ENCODE measurements at regions of chr16 and their contacts with region 1.

Region 1: GRCh38 chr16:71746442-71747046 is 22.0 kb upstream of the PHLPP2 start:
- DNase-seq: no peak
- ATAC-seq: peak; percentile 60
- H3K4me3 Mint-ChIP-seq: no peak overlapping the region
- H3K27ac Mint-ChIP-seq: no peak overlapping the region
- H3K4me1 Mint-ChIP-seq: no peaks in the 10 kb centered on the region
- H3K27me3 Mint-ChIP-seq: no peaks in the 10 kb centered on the region
- CTCF ChIP-seq: peak; percentile 88

Region 2: DNA sequence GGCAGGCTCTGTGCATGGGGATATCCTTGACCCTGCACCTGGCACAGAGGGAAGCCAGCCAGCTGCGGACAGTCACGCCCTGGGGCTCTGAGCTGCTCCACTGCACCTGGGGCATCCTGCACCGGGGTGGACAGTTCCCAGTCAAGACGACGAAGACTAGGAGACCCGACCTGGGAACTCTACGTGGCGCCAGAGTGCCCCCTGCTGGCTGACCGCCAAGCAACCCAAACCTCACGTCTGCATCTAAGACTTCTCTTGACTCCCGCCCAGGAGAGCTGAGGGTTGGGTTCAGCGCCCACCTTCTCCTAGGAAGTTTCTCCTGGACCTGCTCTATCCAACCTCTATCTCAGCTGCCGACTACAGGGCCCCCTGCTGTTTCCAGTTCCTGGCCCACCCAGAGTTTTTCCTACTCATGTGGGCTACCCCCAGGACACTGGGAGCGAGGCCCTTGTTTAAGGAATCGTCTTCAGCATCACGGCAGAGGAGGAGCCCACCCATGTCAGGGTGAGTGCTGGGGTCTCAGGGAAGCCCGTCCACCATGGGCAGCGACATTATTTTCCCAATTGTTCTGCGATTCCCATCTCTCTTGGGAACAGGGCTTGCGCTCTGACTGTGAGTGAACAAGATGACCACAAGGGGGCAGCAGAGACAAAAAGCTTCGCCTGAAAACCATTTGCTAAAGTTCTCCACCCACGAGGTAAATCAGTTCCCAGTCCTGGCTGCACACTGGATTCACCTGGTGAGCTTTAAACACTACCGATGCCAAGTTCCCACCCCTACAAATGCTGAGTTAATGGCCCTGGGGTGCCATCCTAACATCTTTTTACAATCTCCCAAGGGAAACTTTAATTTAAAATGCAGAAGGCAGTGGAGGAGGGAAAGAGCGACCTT is 334.0 kb before region 1 on chr16:
- CTCF ChIA-PET with region 1: no interaction called
- POLR2A ChIA-PET with region 1: no interaction called
- intact Hi-C with region 1: loop called (anchors 1 kb)
- DNase-seq: peak; percentile 36
- ATAC-seq: peak; percentile 57
- H3K4me3 Mint-ChIP-seq: no peak overlapping the region
- H3K27ac Mint-ChIP-seq: no peak overlapping the region
- H3K4me1 Mint-ChIP-seq: peaks cover 9% of the 10 kb centered on the region
- H3K27me3 Mint-ChIP-seq: peaks cover 32% of the 10 kb centered on the region
- CTCF ChIP-seq: peak; percentile 38

Region 3: GRCh38 chr16:71676236-71676635 is 70.3 kb before region 1 on chr16:
- CTCF ChIA-PET with region 1: no interaction called
- POLR2A ChIA-PET with region 1: no interaction called
- intact Hi-C with region 1: loop called (anchors 1 kb)
- DNase-seq: no peak
- ATAC-seq: no peak
- H3K4me3 Mint-ChIP-seq: no peak overlapping the region
- H3K27ac Mint-ChIP-seq: no peak overlapping the region
- H3K4me1 Mint-ChIP-seq: no peaks in the 10 kb centered on the region
- H3K27me3 Mint-ChIP-seq: no peaks in the 10 kb centered on the region
- CTCF ChIP-seq: no peak

Region 4: GRCh38 chr16:71693164-71693563 is 53.4 kb before region 1 on chr16:
- CTCF ChIA-PET with region 1: no interaction called
- POLR2A ChIA-PET with region 1: no interaction called
- intact Hi-C with region 1: loop called (anchors 1 kb)
- DNase-seq: no peak
- ATAC-seq: peak; percentile 62
- H3K4me3 Mint-ChIP-seq: peak overlapping the region; percentile 6
- H3K27ac Mint-ChIP-seq: peak overlapping the region; percentile 50
- H3K4me1 Mint-ChIP-seq: peaks cover 23% of the 10 kb centered on the region
- H3K27me3 Mint-ChIP-seq: no peaks in the 10 kb centered on the region
- CTCF ChIP-seq: no peak

Region 5: GRCh38 chr16:71723537-71724319 is 22.8 kb before region 1 on chr16:
- CTCF ChIA-PET with region 1: no interaction called
- POLR2A ChIA-PET with region 1: interaction called, 5 read pairs
- intact Hi-C with region 1: loop called (anchors 1 kb)
- DNase-seq: peak; percentile 87
- ATAC-seq: peak; percentile 80
- H3K4me3 Mint-ChIP-seq: peak overlapping the region; percentile 85
- H3K27ac Mint-ChIP-seq: peak overlapping the region; percentile 85
- H3K4me1 Mint-ChIP-seq: peaks cover 50% of the 10 kb centered on the region
- H3K27me3 Mint-ChIP-seq: no peaks in the 10 kb centered on the region
- CTCF ChIP-seq: no peak

Region 6: GRCh38 chr16:71781741-71782140 is 35.2 kb after region 1 on chr16:
- CTCF ChIA-PET with region 1: no interaction called
- POLR2A ChIA-PET with region 1: no interaction called
- intact Hi-C with region 1: loop called (anchors 5 kb)
- DNase-seq: no peak
- ATAC-seq: no peak
- H3K4me3 Mint-ChIP-seq: no peak overlapping the region
- H3K27ac Mint-ChIP-seq: no peak overlapping the region
- H3K4me1 Mint-ChIP-seq: peaks cover 24% of the 10 kb centered on the region
- H3K27me3 Mint-ChIP-seq: no peaks in the 10 kb centered on the region
- CTCF ChIP-seq: no peak

Region 7: DNA sequence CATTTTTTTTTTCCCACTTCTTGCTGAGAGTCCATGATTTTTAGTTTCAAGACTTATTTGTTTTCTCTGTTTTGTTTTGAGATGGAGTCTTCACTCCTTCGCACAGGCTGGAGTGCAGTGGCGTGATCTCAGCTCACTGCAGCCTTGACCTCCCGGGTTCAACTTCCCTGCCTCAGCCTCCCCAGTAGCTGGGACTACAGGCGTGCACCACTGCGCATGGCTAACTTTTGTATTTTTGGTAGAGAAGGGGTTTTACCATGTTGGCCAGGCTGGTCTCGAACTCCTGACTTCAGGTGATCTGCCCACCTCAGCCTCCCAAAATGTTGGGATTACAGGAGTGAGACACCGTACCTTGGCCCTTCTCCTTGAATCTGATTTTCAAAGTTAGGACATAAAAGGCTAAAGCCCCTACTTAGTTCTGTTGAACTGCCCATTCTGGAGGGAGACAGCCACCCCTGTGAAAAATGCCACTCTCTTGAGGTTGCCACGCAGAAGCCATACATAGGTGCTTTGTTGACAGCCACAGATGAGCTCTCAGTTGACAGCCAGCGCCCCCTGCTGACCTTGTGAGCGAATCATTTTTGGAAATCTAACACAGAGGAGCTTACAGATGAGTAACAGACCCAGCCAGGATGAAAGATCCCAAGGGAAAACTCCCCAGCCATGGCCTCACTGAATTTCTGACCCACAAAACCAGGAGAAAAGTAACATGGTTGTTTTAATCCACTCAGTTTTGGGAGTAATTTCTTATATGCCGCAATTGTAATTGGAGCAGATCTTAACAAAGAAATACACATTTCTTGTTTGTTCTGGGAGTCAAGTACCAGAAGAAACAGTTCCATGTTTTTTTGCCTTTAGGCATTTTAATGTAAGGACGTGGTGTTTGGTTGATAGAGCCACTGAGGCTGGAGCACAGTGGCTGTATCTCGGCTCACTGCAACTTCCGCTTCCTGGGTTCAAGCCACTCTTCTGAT is 214.8 kb after region 1 on chr16:
- CTCF ChIA-PET with region 1: interaction called, 5 read pairs
- POLR2A ChIA-PET with region 1: no interaction called
- intact Hi-C with region 1: loop called (anchors 1 kb)
- DNase-seq: peak; percentile 63
- ATAC-seq: peak; percentile 89
- H3K4me3 Mint-ChIP-seq: no peak overlapping the region
- H3K27ac Mint-ChIP-seq: no peak overlapping the region
- H3K4me1 Mint-ChIP-seq: peaks cover 27% of the 10 kb centered on the region
- H3K27me3 Mint-ChIP-seq: peaks cover 3% of the 10 kb centered on the region
- CTCF ChIP-seq: no peak